ENCODE measurements at regions of chr20 and their contacts with region 1.

Region 1: DNA sequence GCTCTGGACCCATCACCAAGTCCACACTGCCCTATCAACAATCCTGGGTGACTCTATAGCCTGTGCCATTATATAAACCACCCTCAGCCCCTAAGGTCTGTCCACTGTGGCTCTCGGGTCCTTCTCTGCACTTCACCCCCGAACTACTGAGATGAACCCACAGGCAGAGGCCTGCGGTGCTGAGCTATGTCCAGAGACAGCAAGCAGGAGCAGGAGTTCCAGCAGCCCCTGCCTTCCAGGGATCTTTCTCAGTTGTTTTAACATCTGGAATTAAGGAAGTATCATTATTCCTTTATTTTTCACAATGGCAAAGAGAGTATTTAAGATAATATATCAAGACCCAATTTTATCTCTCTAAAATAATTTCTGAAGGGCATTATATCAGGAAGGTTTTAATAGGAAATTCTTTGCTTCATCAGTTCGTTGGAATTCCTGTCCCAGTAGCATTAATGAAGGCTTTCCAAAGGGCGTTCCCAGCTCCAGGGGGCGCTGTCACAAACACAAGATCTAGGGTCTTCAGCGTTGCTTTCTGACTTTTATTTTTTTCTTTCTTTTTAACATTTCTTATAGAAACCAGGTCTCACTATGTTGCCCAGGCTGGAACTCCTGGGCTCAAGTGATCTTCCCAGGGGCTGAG is 27.3 kb downstream of the RRBP1 start:
- DNase-seq: no peak
- ATAC-seq: peak; percentile 45; the same call in 1 of the 2 replicates
- H3K4me3 ChIP-seq: no peak overlapping the region
- H3K27ac ChIP-seq: no peak overlapping the region
- H3K4me1 ChIP-seq: peaks cover 0 to 18% of the 10 kb centered on the region in 2 experiments; a peak in 2 of 4 replicates
- H3K27me3 ChIP-seq: no peaks in the 10 kb centered on the region
- CTCF ChIP-seq: peak; percentile 29 to 81 (median 73); a peak in 5 of 6 replicates
- POLR2A ChIP-seq: no peak
- RAD21 ChIP-seq: peak; percentile 43

Region 2: DNA sequence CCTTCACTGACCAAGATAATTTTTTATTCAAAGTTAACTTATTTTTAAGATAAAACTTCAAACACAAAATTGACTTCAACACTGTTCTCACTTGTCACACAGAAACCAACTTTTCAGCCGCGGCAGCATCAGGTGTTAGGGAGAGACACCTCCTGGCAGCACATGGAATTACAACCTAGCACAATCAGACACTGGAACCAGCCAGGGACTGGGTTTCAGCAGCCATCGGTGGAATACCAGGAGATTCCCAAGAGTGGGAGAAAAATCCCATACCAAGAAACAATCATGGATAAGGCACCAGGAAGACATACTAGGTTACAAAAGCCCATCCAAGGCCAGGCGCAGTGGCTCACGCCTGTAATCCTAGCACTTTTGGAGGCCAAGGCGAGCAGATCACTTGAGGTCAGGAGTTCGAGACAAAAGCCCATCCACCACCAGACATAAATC is 243.8 kb after region 1 on chr20:
- CTCF ChIA-PET with region 1: interaction called, 4 read pairs
- POLR2A ChIA-PET with region 1: no interaction called
- RAD21 ChIA-PET with region 1: no interaction called
- intact Hi-C with region 1: loop called (anchors 2 kb)
- DNase-seq: peak; percentile 56
- ATAC-seq: peak; percentile 77
- H3K4me3 ChIP-seq: no peak overlapping the region
- H3K27ac ChIP-seq: no peak overlapping the region
- H3K4me1 ChIP-seq: peaks cover 0 to 7% of the 10 kb centered on the region in 2 experiments; a peak in 2 of 4 replicates
- H3K27me3 ChIP-seq: no peaks in the 10 kb centered on the region
- CTCF ChIP-seq: peak; percentile 88 to 89 (median 89)
- POLR2A ChIP-seq: no peak
- RAD21 ChIP-seq: peak; percentile 96

Region 3: DNA sequence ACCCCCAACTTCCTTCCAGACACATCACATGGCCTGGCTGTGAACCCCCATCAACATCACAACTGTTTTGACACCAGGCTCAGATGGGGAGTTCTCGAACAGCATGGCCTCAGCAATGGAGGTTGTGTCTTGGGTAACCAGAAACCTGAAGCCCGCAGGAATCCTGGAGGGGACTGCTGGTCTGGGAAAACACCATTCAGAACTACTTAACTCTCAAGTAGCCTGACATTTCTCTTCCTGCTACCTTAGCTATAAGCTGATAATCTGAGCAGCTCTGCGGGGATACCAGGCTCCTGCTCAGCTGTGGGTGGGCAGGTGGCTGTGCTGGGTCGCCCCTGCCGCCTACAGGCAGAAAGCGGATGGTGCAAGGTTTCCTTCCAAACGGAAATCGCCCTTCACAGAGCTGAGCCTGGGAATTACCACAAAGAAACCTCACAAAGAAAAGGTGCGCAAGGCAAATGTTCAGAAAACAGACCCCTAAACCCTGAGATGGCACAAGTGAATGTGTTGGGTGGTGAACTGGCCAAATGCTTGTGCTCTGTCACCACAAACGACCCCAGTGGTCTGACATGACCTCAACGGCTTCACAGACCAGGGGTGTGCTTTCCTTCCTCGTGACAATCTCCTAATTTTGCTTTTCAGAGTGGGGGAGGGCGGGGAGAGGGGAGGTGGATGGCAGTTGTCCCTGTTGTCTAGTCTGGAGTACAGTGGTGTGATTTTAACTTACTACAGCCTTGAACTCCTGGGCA is 284.3 kb after region 1 on chr20:
- CTCF ChIA-PET with region 1: interaction called, 6 read pairs
- POLR2A ChIA-PET with region 1: no interaction called
- RAD21 ChIA-PET with region 1: no interaction called
- intact Hi-C with region 1: loop called (anchors 1 kb)
- DNase-seq: peak; percentile 22
- ATAC-seq: peak; percentile 85
- H3K4me3 ChIP-seq: no peak overlapping the region
- H3K27ac ChIP-seq: peak overlapping the region; percentile 24; the same call in 1 of the 2 replicates
- H3K4me1 ChIP-seq: peaks cover 0 to 11% of the 10 kb centered on the region in 2 experiments; a peak in 1 of 4 replicates
- H3K27me3 ChIP-seq: no peaks in the 10 kb centered on the region
- CTCF ChIP-seq: peak; percentile 66 to 95 (median 92); a peak in 5 of 6 replicates
- POLR2A ChIP-seq: no peak
- RAD21 ChIP-seq: peak; percentile 88

Region 4: GRCh38 chr20:17995967-17996819 is 341.4 kb after region 1 on chr20:
- CTCF ChIA-PET with region 1: no interaction called
- POLR2A ChIA-PET with region 1: no interaction called
- RAD21 ChIA-PET with region 1: no interaction called
- intact Hi-C with region 1: loop called (anchors 5 kb)
- DNase-seq: peak; percentile 26
- ATAC-seq: peak; percentile 76
- H3K4me3 ChIP-seq: no peak overlapping the region
- H3K27ac ChIP-seq: no peak overlapping the region
- H3K4me1 ChIP-seq: peaks cover 0 to 6% of the 10 kb centered on the region in 2 experiments; a peak in 2 of 4 replicates
- H3K27me3 ChIP-seq: no peaks in the 10 kb centered on the region
- CTCF ChIP-seq: peak; percentile 81 to 96 (median 92)
- POLR2A ChIP-seq: no peak
- RAD21 ChIP-seq: peak; percentile 85